Colonic mucosa (tissue), 4 donors: ENCODE measurements at regions of chr4 and their contacts with region 1.

Region 1: GRCh38 chr4:153634738-153635353 is 49.2 kb upstream of the TLR2 start:
- DNase-seq: no peak
- H3K4me3 ChIP-seq: no peak overlapping the region
- H3K27ac ChIP-seq: no peak overlapping the region
- H3K4me1 ChIP-seq: no peaks in the 10 kb centered on the region
- H3K27me3 ChIP-seq: no peaks in the 10 kb centered on the region
- CTCF ChIP-seq: peak; percentile 47

Region 2: DNA sequence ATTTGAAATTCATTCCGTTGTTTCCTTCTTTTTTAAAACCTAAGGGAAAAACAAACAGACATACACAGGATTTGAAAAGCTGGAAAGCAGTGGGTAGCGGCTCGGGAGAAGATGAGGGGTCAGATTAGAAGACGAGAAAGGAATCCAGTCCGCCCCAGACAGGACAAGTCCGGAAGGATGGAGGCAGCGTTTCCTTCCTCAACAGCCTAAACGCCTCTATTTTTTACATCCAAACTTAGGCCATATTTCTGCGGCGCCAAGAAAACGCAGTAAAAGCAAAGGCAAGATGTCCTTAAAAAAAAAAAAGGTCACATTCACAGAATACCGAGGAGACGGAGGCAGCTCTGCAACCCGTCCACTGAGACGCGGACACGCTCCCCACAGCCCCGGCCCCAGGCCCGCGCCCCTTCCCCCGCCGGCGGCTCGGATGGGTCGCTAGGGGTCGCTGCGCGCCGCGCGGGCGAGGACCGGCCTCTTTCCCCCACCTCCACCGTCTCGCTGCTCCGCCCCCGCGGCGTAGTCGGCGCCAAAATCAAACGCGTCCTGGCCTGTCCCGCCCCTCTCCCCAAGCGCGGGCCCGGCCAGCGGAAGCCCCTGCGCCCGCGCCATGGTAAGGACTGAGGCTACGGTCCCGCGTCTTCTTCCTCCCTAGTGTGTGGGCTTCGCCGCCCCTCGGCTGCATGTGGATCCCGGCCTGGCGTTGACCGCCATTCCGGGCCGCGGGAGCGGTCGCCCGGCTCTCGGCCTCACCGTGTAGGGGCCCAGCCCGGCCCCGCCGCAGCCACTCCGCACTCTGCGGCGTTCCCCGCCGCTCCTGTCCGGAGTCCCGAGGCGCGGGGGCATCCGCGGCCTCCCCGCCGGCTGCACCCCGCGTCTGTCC is 290.5 kb before region 1 on chr4 and contains the start of gene MND1:
- intact Hi-C with region 1: loop called (anchors 5 kb)
- DNase-seq: peak; percentile 90
- H3K4me3 ChIP-seq: peak within 1 kb of the TSS; percentile 97
- H3K27ac ChIP-seq: no peak within 1 kb of the TSS
- H3K4me1 ChIP-seq: no peaks in the 10 kb centered on the region
- H3K27me3 ChIP-seq: no peaks in the 10 kb centered on the region
- CTCF ChIP-seq: peak; percentile 92
- total RNA-seq, gene MND1: 4.8 to 11.7 TPM

Region 3: GRCh38 chr4:153521999-153522801 is 112.6 kb before region 1 on chr4:
- intact Hi-C with region 1: no loop called
- DNase-seq: peak; percentile 17
- H3K4me3 ChIP-seq: no peak overlapping the region
- H3K27ac ChIP-seq: peak overlapping the region; percentile 28
- H3K4me1 ChIP-seq: no peaks in the 10 kb centered on the region
- H3K27me3 ChIP-seq: no peaks in the 10 kb centered on the region
- CTCF ChIP-seq: no peak

Region 4: GRCh38 chr4:153750197-153750817 is 115.5 kb after region 1 on chr4:
- intact Hi-C with region 1: loop called (anchors 10 kb)
- DNase-seq: peak; percentile 63
- H3K4me3 ChIP-seq: no peak overlapping the region
- H3K27ac ChIP-seq: no peak overlapping the region
- H3K4me1 ChIP-seq: no peaks in the 10 kb centered on the region
- H3K27me3 ChIP-seq: no peaks in the 10 kb centered on the region
- CTCF ChIP-seq: peak; percentile 51